Endothelial cell of umbilical vein (primary cell): ENCODE measurements at regions of chr2 and their contacts with region 1.

Region 1: DNA sequence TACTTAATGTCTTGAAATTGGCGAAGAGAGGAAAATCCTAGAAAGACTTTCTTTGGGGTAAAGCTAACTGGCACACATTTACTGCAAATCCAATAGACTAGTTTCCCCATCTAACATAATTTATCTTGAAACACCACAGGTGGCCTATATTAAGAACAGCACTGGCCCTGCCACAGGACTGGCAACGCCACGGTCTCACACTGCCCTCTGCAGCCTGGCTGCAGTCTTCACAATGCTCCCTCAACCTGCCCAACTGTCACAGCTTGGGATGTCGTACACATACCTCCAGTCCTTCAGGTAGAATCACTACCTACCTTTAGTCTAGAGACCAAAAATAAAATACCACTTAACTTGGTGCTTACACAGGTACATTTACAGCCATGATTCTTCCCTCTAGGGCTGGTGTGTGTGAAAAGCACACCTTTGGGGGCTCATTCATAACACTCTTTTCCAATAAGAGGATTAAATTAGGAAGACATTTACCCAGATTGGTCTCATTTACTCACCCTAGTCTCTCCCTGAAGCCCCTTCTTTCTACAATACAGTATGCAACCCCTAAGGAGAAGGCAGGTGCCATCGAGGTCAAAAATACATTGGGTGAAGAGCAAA is 222.2 kb downstream of the C1D start:
- DNase-seq: peak; percentile 80
- H3K4me3 ChIP-seq: no peak overlapping the region
- H3K27ac ChIP-seq: no peak overlapping the region
- H3K4me1 ChIP-seq: peaks cover 8% of the 10 kb centered on the region
- H3K27me3 ChIP-seq: no peaks in the 10 kb centered on the region
- CTCF ChIP-seq: peak; percentile 79 to 89
- POLR2A ChIP-seq: no peak

Region 2: GRCh38 chr2:66574701-66575624 is 1265.6 kb before region 1 on chr2:
- CTCF ChIA-PET with region 1: interaction called, 6 read pairs
- POLR2A ChIA-PET with region 1: no interaction called
- dilution Hi-C with region 1: no loop called
- intact Hi-C with region 1: loop called (anchors 2 kb)
- DNase-seq: peak; percentile 81
- H3K4me3 ChIP-seq: peak overlapping the region; percentile 56 to 92 (median 85)
- H3K27ac ChIP-seq: peak overlapping the region; percentile 74
- H3K4me1 ChIP-seq: peaks cover 18% of the 10 kb centered on the region
- H3K27me3 ChIP-seq: peaks cover 32 to 38% of the 10 kb centered on the region in 2 experiments
- CTCF ChIP-seq: peak; percentile 45 to 60
- POLR2A ChIP-seq: no peak

Region 3: DNA sequence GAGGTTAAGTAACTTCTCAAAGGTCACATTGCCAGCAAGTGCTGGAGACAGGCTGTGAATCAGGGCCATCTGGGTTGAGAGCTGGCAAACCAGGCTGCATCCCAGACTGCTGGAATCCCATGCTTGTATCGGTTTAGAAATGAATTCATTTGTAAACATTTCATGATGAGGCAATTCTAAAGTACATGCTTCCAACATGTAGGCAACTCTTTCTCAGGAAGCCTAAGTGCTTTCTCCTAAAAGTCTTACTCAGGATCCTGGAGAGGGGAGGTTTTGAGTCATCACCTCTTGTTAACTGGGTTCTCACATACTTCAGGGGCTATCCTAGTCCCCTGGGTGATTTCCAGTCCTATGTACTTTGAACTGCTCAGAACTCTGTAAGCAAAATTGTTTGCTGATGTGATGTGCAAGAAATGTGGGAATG is 989.1 kb before region 1 on chr2:
- CTCF ChIA-PET with region 1: no interaction called
- POLR2A ChIA-PET with region 1: no interaction called
- dilution Hi-C with region 1: no loop called
- intact Hi-C with region 1: loop called (anchors 5 kb)
- DNase-seq: no peak
- H3K4me3 ChIP-seq: no peak overlapping the region
- H3K27ac ChIP-seq: no peak overlapping the region
- H3K4me1 ChIP-seq: no peaks in the 10 kb centered on the region
- H3K27me3 ChIP-seq: peaks cover 2 to 5% of the 10 kb centered on the region in 2 experiments
- CTCF ChIP-seq: no peak
- POLR2A ChIP-seq: no peak

Region 4: DNA sequence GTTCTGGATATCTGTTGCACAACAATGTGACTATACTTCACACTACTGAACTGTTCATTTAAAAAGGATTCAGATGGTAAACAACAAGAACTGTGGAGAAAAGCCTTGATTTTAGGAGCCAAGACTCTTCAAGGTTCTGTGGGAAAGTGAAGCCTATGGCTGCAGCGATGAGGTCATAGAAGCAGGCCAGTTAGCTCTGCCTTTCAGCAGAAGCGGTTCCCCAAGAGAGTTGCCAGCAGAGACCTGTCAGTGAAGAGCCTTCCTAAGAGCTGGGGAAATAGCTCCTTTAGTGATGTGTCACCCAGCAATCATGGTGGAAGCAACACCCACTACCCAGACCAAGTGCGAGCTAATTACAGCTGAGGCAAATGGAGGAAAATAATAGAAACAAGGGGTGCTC is 789.9 kb before region 1 on chr2:
- CTCF ChIA-PET with region 1: no interaction called
- POLR2A ChIA-PET with region 1: no interaction called
- dilution Hi-C with region 1: no loop called
- intact Hi-C with region 1: no loop called
- DNase-seq: no peak
- H3K4me3 ChIP-seq: no peak overlapping the region
- H3K27ac ChIP-seq: no peak overlapping the region
- H3K4me1 ChIP-seq: no peaks in the 10 kb centered on the region
- H3K27me3 ChIP-seq: no peaks in the 10 kb centered on the region
- CTCF ChIP-seq: no peak
- POLR2A ChIP-seq: no peak

Region 5: GRCh38 chr2:67215214-67216055 is 625.1 kb before region 1 on chr2:
- CTCF ChIA-PET with region 1: interaction called, 3 read pairs
- POLR2A ChIA-PET with region 1: no interaction called
- dilution Hi-C with region 1: no loop called
- intact Hi-C with region 1: loop called (anchors 2 kb)
- DNase-seq: peak; percentile 77
- H3K4me3 ChIP-seq: no peak overlapping the region
- H3K27ac ChIP-seq: no peak overlapping the region
- H3K4me1 ChIP-seq: no peaks in the 10 kb centered on the region
- H3K27me3 ChIP-seq: no peaks in the 10 kb centered on the region
- CTCF ChIP-seq: peak; percentile 74 to 85
- POLR2A ChIP-seq: no peak

Region 6: GRCh38 chr2:67476809-67477790 is 363.5 kb before region 1 on chr2:
- CTCF ChIA-PET with region 1: interaction called, 7 read pairs
- POLR2A ChIA-PET with region 1: no interaction called
- dilution Hi-C with region 1: no loop called
- intact Hi-C with region 1: loop called (anchors 1 kb)
- DNase-seq: peak; percentile 68
- H3K4me3 ChIP-seq: no peak overlapping the region
- H3K27ac ChIP-seq: no peak overlapping the region
- H3K4me1 ChIP-seq: no peaks in the 10 kb centered on the region
- H3K27me3 ChIP-seq: no peaks in the 10 kb centered on the region
- CTCF ChIP-seq: peak; percentile 39 to 40
- POLR2A ChIP-seq: no peak

Region 7: DNA sequence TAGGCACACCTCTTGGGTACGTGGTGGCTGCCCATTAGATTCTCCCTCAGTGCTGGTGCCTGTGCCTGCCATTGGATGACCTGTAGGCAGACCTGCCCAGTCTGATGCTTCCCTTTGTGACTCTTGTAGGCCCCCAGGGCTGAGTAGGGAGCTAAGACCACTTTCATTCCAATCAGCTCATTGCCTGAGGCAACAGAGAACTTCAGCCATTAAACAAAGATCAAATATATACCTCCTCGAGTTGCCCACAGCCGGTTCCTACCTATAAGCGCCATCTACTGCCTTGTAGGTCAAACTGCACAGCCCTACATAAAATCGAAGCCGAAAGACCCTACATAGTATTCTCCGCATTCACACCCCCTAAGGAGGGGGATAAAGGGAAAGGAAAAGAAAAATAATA is 258.8 kb before region 1 on chr2:
- CTCF ChIA-PET with region 1: interaction called, 3 read pairs
- POLR2A ChIA-PET with region 1: no interaction called
- dilution Hi-C with region 1: no loop called
- intact Hi-C with region 1: loop called (anchors 5 kb)
- DNase-seq: no peak
- H3K4me3 ChIP-seq: no peak overlapping the region
- H3K27ac ChIP-seq: no peak overlapping the region
- H3K4me1 ChIP-seq: no peaks in the 10 kb centered on the region
- H3K27me3 ChIP-seq: no peaks in the 10 kb centered on the region
- CTCF ChIP-seq: peak; percentile 29
- POLR2A ChIP-seq: no peak

Region 8: DNA sequence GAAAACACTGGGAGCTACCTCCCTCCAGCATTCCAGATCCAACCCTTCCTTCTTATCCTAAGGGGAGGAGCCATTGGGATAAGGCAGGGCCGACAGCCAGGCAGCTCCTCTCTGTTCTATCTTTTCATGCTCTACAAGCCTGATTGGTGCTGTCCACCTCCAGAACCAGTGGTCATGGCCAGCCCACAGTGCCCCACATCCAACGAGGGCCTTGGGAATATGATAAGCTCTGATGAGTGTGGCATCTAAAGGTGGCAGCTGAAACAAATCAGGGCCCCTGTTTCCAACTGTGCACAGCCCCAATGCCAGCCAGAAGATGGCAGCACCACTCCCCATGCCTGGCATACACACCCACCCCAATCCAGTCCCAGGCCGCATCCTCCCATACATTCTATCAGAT is 107.0 kb before region 1 on chr2:
- CTCF ChIA-PET with region 1: interaction called, 211 read pairs
- POLR2A ChIA-PET with region 1: no interaction called
- dilution Hi-C with region 1: no loop called
- intact Hi-C with region 1: loop called (anchors 1 kb)
- DNase-seq: peak; percentile 55
- H3K4me3 ChIP-seq: no peak overlapping the region
- H3K27ac ChIP-seq: no peak overlapping the region
- H3K4me1 ChIP-seq: no peaks in the 10 kb centered on the region
- H3K27me3 ChIP-seq: no peaks in the 10 kb centered on the region
- CTCF ChIP-seq: peak; percentile 32 to 82
- POLR2A ChIP-seq: no peak

Region 9: GRCh38 chr2:67808112-67808511 is 32.5 kb before region 1 on chr2:
- CTCF ChIA-PET with region 1: no interaction called
- POLR2A ChIA-PET with region 1: no interaction called
- dilution Hi-C with region 1: no loop called
- intact Hi-C with region 1: no loop called
- DNase-seq: no peak
- H3K4me3 ChIP-seq: no peak overlapping the region
- H3K27ac ChIP-seq: no peak overlapping the region
- H3K4me1 ChIP-seq: no peaks in the 10 kb centered on the region
- H3K27me3 ChIP-seq: no peaks in the 10 kb centered on the region
- CTCF ChIP-seq: no peak
- POLR2A ChIP-seq: no peak

Region 10: GRCh38 chr2:67854798-67855197 is 14.2 kb after region 1 on chr2:
- CTCF ChIA-PET with region 1: no interaction called
- POLR2A ChIA-PET with region 1: no interaction called
- dilution Hi-C with region 1: no loop called
- intact Hi-C with region 1: no loop called
- DNase-seq: no peak
- H3K4me3 ChIP-seq: no peak overlapping the region
- H3K27ac ChIP-seq: no peak overlapping the region
- H3K4me1 ChIP-seq: no peaks in the 10 kb centered on the region
- H3K27me3 ChIP-seq: no peaks in the 10 kb centered on the region
- CTCF ChIP-seq: no peak
- POLR2A ChIP-seq: no peak

Region 11: GRCh38 chr2:67881816-67882215 is 41.3 kb after region 1 on chr2:
- CTCF ChIA-PET with region 1: no interaction called
- POLR2A ChIA-PET with region 1: no interaction called
- dilution Hi-C with region 1: no loop called
- intact Hi-C with region 1: no loop called
- DNase-seq: no peak
- H3K4me3 ChIP-seq: no peak overlapping the region
- H3K27ac ChIP-seq: no peak overlapping the region
- H3K4me1 ChIP-seq: no peaks in the 10 kb centered on the region
- H3K27me3 ChIP-seq: no peaks in the 10 kb centered on the region
- CTCF ChIP-seq: no peak
- POLR2A ChIP-seq: no peak